WTC11 (cell line): ENCODE measurements at regions of chr1 and their contacts with region 1.

Region 1: DNA sequence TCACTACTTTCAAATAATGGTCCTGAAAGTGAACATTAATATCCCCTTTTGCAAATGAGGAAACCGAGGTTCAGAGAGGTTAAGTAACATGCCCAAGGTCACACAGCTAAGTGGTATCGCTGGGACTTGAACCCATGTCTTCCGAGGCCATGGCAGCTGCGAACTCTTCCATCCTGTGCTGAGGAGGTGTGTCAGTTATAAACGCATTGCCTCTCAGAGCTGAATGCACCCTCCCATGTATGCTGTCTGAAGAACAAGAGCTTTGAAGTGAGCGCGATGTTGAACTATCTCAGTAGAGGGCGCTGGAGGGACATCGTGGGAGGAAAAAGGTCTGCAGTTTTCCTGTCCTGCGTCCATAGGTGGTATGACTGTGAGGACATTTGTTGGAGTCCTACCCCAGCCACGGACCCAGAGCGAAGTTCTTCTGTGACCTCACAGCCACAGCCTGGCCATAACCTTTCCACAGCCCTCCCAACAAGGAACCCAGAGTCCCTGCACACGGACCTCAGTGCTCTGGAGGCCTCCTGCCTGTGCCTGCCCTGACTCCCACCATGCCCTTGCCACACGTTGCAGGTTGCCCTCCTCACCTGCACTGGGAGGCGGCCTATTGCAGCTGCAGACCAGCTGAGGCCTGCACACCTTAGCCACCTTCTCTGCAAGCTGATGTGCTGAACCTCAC is 7.5 kb downstream of the MYOC start:
- DNase-seq: peak; percentile 91
- ATAC-seq: peak; percentile 74
- H3K4me3 Mint-ChIP-seq: peak overlapping the region; percentile 32; the same call in 1 of the 2 replicates
- H3K27ac Mint-ChIP-seq: no peak overlapping the region
- H3K4me1 Mint-ChIP-seq: peaks cover 39% of the 10 kb centered on the region
- H3K27me3 Mint-ChIP-seq: no peaks in the 10 kb centered on the region
- CTCF ChIP-seq: peak; percentile 62

Region 2: DNA sequence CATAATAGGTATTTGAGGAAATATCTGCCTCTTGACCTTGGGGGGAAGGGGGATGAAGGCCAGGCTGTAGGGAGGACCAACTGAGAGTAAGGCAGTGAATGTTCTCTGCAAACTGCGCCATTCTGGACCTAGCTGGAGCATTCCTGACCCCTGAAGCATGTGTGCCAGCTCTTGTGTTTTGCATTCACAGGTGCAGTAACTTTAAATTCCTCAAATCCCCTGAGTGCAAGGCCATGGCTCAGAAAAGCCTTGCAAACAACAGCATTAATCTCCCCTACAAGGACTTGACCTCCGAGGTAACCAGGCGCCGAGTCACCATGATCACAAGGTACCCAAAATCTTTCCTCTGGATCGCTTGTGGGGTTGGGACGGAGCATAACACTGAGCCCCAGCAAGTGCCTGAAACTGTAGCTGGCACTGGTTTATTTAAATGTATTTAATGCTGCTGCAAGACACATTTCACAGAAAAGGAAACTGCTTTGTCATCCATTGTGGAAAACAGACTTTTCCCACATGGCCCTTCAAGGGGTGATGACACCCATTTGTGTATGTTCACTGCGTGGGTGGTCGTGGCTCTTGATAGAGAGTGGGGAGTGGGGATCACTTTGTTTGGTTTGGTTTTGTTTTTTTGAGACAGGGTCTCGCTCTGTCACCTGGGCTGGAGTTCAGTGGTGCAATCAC is 21.2 kb before region 1 on chr1:
- CTCF ChIA-PET with region 1: interaction called, 20 read pairs
- POLR2A ChIA-PET with region 1: no interaction called
- DNase-seq: no peak
- ATAC-seq: no peak; the same call in 1 of the 2 replicates
- H3K4me3 Mint-ChIP-seq: no peak overlapping the region
- H3K27ac Mint-ChIP-seq: 0 out of 2 replicates have a peak overlapping the region, but pooled peaks have one; percentile 36
- H3K4me1 Mint-ChIP-seq: peaks cover 27% of the 10 kb centered on the region
- H3K27me3 Mint-ChIP-seq: no peaks in the 10 kb centered on the region
- CTCF ChIP-seq: no peak

Region 3: GRCh38 chr1:171715813-171716251 is 70.9 kb after region 1 on chr1:
- CTCF ChIA-PET with region 1: interaction called, 56 read pairs
- POLR2A ChIA-PET with region 1: interaction called, 3 read pairs
- DNase-seq: no peak
- ATAC-seq: peak; percentile 39; the same call in 1 of the 2 replicates
- H3K4me3 Mint-ChIP-seq: no peak overlapping the region
- H3K27ac Mint-ChIP-seq: 0 out of 2 replicates have a peak overlapping the region, but pooled peaks have one; percentile 23
- H3K4me1 Mint-ChIP-seq: no peaks in the 10 kb centered on the region
- H3K27me3 Mint-ChIP-seq: no peaks in the 10 kb centered on the region
- CTCF ChIP-seq: no peak

Region 4: DNA sequence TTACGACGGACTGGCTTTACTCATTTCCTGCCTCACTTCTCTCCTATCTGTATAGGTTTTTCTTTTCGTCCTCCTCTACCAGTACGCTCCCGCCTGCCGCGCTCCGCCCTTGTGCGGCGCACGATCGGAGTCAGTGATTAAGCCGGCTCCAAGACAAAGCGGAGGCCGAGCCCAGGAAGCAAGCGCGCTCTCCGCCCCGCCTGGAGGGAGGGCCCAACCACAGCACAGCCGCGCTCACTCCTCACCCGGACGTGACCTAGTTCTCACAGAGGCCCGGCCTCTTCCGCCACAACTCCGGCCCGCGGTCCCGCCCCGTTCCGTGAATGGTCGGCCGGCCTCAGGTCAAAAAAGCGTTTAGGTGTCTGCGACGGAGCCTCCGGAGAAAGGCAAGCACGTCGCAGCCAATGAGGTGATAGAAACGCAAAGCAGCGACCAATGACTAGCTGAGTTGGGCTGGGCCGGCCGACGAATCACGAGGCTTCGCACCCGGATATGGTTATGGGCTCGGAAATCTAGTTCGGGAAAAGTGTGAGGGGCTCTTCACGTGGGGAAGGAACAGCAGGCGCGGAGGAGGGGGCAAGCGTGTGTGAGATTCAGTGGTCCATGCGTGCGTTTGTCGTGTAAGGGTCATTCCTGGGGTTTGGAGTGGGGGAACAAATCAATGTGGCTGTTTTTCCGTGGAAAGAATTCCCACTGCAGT is 136.4 kb after region 1 on chr1 and contains the start of gene METTL13:
- CTCF ChIA-PET with region 1: interaction called, 50 read pairs
- POLR2A ChIA-PET with region 1: interaction called, 4 read pairs
- DNase-seq: peak; percentile 98
- ATAC-seq: peak; percentile 98
- H3K4me3 Mint-ChIP-seq: peak within 1 kb of the TSS; percentile 94
- H3K27ac Mint-ChIP-seq: peak within 1 kb of the TSS; percentile 98
- H3K4me1 Mint-ChIP-seq: peaks cover 12% of the 10 kb centered on the region
- H3K27me3 Mint-ChIP-seq: no peaks in the 10 kb centered on the region
- CTCF ChIP-seq: no peak
- total RNA-seq, gene METTL13: 40.4 to 46.5 TPM (median 43.6 TPM) in 3 replicates